Colonic mucosa (tissue), 4 donors: ENCODE measurements at regions of chr15 and their contacts with region 1.

Region 1: GRCh38 chr15:69160141-69160993 is at the start of gene GLCE:
- DNase-seq: peak; percentile 97
- H3K4me3 ChIP-seq: peak within 1 kb of the TSS; percentile 75
- H3K27ac ChIP-seq: peak within 1 kb of the TSS; percentile 73
- H3K4me1 ChIP-seq: no peaks in the 10 kb centered on the region
- H3K27me3 ChIP-seq: no peaks in the 10 kb centered on the region
- CTCF ChIP-seq: no peak
- total RNA-seq, gene GLCE: 28.0 to 61.1 TPM

Region 2: DNA sequence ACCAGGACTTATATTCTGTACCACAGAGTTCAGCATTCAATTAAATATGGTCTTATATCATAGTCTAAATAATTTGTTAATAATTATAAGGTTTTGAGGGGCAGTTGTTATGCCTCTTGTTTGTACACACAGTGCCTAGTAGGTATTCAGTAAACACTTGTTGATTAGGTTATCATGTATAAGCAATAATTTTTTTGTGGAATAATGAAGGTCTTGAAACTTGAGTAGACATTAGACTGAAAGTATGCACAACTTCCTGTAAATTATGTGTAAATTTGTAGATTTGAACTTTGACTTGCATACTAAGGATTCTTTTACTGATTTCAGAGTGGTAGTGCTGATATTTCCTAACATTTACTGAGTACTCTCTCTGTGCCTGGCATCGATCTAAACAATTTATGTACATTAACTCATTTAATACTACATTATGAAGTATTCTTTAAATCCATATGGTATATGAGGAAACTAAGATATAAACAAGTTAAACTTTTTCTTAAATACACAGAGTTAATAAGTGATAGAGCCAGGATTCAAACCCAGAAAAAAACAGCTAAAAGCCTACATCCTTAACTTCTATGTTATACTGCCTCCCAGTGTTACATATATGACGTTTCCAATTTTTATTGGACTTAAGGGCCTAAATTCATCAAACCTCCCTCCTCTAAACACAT is 65.1 kb after region 1 on chr15:
- intact Hi-C with region 1: loop called (anchors 10 kb)
- DNase-seq: no peak
- H3K4me3 ChIP-seq: no peak overlapping the region
- H3K27ac ChIP-seq: peak overlapping the region; percentile 30
- H3K4me1 ChIP-seq: no peaks in the 10 kb centered on the region
- H3K27me3 ChIP-seq: no peaks in the 10 kb centered on the region
- CTCF ChIP-seq: no peak

Region 3: GRCh38 chr15:69244798-69245197 is 84.4 kb after region 1 on chr15:
- intact Hi-C with region 1: no loop called
- DNase-seq: no peak
- H3K4me3 ChIP-seq: no peak overlapping the region
- H3K27ac ChIP-seq: no peak overlapping the region
- H3K4me1 ChIP-seq: no peaks in the 10 kb centered on the region
- H3K27me3 ChIP-seq: no peaks in the 10 kb centered on the region
- CTCF ChIP-seq: no peak